MCF 10A (cell line): ENCODE measurements at regions of chr13 and their contacts with region 1.

Region 1: DNA sequence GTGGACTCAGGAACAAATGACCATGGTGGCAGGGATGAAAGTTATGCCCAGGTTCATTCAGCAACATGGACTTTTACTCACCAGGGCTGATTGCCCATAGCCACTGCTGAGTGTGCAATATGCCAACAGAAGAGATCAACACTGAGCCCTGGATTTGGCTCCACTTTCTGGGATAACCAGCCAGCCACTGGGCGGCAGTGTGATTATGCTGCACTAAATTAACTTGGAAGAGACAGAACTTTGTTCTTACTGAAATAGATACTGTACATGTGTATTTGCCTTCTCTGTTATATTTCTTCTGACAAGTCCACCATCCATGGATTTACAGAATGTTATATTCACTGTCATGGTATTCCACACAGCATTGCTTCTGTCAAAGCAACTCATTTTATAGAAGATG is 257.4 kb downstream of the TDRD3 start:
- DNase-seq: peak; percentile 65
- H3K4me3 Mint-ChIP-seq: no peak overlapping the region
- H3K27ac Mint-ChIP-seq: no peak overlapping the region
- H3K4me1 Mint-ChIP-seq: no peaks in the 10 kb centered on the region
- H3K27me3 Mint-ChIP-seq: peaks cover 30% of the 10 kb centered on the region
- CTCF ChIP-seq: peak; percentile 62

Region 2: GRCh38 chr13:60990032-60990733 is 335.8 kb after region 1 on chr13:
- CTCF ChIA-PET with region 1: interaction called, 3 read pairs
- POLR2A ChIA-PET with region 1: no interaction called
- intact Hi-C with region 1: loop called (anchors 1 kb)
- DNase-seq: peak; percentile 42
- H3K4me3 Mint-ChIP-seq: no peak overlapping the region
- H3K27ac Mint-ChIP-seq: no peak overlapping the region
- H3K4me1 Mint-ChIP-seq: no peaks in the 10 kb centered on the region
- H3K27me3 Mint-ChIP-seq: no peaks in the 10 kb centered on the region
- CTCF ChIP-seq: peak; percentile 13

Region 3: DNA sequence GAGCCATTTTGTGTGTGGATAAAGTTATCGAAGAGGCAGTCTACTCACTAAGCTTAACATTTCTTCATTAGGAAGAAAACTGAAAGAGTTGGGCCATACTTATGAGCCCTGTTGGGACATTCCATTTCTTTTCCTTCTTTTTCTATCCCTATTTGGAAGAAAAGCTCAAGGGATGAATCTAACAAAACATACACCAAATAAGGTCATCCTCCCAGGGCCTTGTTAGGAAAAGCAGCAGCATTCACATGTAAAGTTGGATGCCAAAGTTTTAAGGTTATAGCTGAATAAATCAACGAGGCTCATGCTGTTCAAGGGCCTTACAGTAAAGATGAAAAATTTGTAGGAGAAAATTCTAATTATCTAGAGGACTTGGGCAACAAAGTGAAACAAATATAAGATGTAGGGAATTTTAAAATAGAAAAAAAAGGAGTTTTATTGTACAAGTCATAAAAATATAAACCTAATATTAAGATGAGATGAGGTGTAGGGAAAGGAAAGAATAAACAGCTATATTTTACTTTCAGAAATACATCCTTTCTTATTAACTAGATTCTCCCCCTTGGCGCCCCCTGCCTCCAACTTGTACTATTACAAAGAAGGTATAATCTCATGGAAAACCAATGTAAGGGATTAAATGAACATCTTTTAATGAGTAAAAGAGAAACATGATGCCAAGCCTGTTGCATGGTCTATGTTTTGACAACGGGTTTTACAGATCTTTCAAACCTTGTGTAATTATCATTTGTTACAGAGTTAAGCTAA is 600.8 kb after region 1 on chr13:
- CTCF ChIA-PET with region 1: no interaction called
- POLR2A ChIA-PET with region 1: no interaction called
- intact Hi-C with region 1: loop called (anchors 1 kb)
- DNase-seq: peak; percentile 41
- H3K4me3 Mint-ChIP-seq: no peak overlapping the region
- H3K27ac Mint-ChIP-seq: no peak overlapping the region
- H3K4me1 Mint-ChIP-seq: no peaks in the 10 kb centered on the region
- H3K27me3 Mint-ChIP-seq: peaks cover 16% of the 10 kb centered on the region
- CTCF ChIP-seq: peak; percentile 14

Region 4: DNA sequence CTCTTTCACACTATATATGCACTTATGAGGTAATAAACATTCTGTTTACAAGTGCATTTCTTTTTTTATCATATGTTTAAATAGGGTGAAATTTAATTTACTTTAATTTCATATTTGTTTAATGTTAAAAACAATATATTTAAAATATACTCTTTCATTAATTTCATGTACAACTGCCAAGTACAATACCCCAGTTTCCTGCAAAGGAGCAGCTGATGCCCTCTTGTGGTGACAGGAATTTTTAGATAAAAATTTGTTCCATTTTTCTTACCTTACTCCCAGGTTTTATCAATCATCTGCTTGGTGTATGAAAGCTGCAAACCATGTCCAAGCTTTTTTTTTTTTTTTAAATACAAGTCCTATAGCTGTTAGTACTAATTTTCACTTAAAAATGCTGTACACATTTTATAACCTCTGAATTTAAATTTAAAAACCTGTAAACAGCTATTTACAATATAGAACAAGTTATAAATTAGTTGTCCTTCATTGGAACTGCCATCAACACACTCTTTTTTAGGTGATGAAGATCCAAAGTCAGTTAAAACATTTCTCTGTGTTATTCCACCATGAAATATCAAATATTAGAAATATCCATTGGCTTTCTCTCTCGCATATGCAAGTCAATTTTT is 756.4 kb after region 1 on chr13:
- CTCF ChIA-PET with region 1: interaction called, 4 read pairs
- POLR2A ChIA-PET with region 1: no interaction called
- intact Hi-C with region 1: loop called (anchors 1 kb)
- DNase-seq: peak; percentile 24
- H3K4me3 Mint-ChIP-seq: no peak overlapping the region
- H3K27ac Mint-ChIP-seq: no peak overlapping the region
- H3K4me1 Mint-ChIP-seq: peaks cover 9% of the 10 kb centered on the region
- H3K27me3 Mint-ChIP-seq: peaks cover 53% of the 10 kb centered on the region
- CTCF ChIP-seq: peak; percentile 43

Region 5: DNA sequence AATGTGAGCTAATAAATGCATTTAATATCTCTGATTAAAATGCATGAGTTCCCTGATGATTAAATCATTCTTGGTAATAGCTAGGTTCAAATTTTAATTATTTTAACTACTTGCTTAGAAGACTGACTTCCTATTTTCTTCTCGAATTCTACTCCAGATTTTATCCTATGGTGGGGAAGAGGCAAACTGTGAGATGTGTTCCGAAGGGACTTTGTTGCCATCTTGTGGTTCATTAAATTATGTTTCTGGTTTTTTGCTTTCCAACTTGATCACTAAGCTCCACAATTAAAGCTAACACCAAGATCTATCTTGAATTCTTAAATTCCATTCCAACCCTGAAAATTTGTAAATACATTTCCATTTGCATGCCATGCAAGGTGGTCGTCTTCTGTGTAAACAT is 1299.7 kb after region 1 on chr13:
- CTCF ChIA-PET with region 1: no interaction called
- POLR2A ChIA-PET with region 1: no interaction called
- intact Hi-C with region 1: loop called (anchors 5 kb)
- DNase-seq: peak; percentile 52
- H3K4me3 Mint-ChIP-seq: no peak overlapping the region
- H3K27ac Mint-ChIP-seq: no peak overlapping the region
- H3K4me1 Mint-ChIP-seq: no peaks in the 10 kb centered on the region
- H3K27me3 Mint-ChIP-seq: peaks cover 23% of the 10 kb centered on the region
- CTCF ChIP-seq: peak; percentile 45